Esophagus squamous epithelium (tissue), 5 donors: ENCODE measurements at regions of chr2 and their contacts with region 1.

Region 1: GRCh38 chr2:69306822-69307578 is 80.0 kb downstream of the GFPT1 start:
- DNase-seq: peak; percentile 33
- H3K4me3 ChIP-seq: peak overlapping the region; percentile 34 to 84 (median 60)
- H3K27ac ChIP-seq: peak overlapping the region; percentile 67 to 88 (median 83)
- H3K4me1 ChIP-seq: peaks cover 34 to 56% (median 36%) of the 10 kb centered on the region in 3 donors
- H3K27me3 ChIP-seq: peaks cover 0 to 24% (median 0%) of the 10 kb centered on the region in 4 donors
- CTCF ChIP-seq: peak; percentile 33 to 87 (median 80)
- POLR2A ChIP-seq: no peak

Region 2: GRCh38 chr2:69012310-69013141 is 294.5 kb before region 1 on chr2:
- intact Hi-C with region 1: loop called (anchors 5 kb)
- DNase-seq: no peak
- H3K4me3 ChIP-seq: peak overlapping the region; percentile 47 to 87 (median 76)
- H3K27ac ChIP-seq: peak overlapping the region; percentile 63 to 91 (median 88)
- H3K4me1 ChIP-seq: peaks cover 0 to 49% (median 23%) of the 10 kb centered on the region in 3 donors
- H3K27me3 ChIP-seq: peaks cover 0 to 22% (median 0%) of the 10 kb centered on the region in 4 donors
- CTCF ChIP-seq: peak in 5 of 6 experiments; percentile 76 to 79 (median 77)
- POLR2A ChIP-seq: no peak

Region 3: DNA sequence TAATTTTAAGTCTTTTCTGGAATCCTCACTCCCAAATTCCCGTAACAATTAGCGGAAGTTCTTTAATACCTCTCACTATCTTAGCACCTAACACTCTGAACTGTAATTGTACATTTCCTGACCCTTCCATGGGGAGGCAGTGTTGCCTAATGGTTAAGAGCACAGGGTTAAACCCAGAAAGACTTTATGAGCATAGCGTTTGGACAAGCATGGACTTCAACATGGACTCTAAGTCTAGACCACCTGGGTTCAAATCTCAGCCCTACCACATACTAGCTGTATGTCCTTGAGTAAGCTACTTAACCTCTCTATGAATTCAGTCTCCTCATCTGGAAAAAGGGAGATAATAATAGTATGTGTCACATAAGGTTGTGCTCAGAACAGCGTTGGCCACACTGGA is 281.0 kb before region 1 on chr2:
- intact Hi-C with region 1: loop called (anchors 5 kb)
- DNase-seq: no peak
- H3K4me3 ChIP-seq: no peak overlapping the region
- H3K27ac ChIP-seq: peak overlapping the region in 1 of 4 donors; percentile 19
- H3K4me1 ChIP-seq: peaks cover 0 to 36% (median 19%) of the 10 kb centered on the region in 3 donors
- H3K27me3 ChIP-seq: no peaks in the 10 kb centered on the region
- CTCF ChIP-seq: peak in 5 of 6 experiments; percentile 47 to 78 (median 65)
- POLR2A ChIP-seq: no peak

Region 4: DNA sequence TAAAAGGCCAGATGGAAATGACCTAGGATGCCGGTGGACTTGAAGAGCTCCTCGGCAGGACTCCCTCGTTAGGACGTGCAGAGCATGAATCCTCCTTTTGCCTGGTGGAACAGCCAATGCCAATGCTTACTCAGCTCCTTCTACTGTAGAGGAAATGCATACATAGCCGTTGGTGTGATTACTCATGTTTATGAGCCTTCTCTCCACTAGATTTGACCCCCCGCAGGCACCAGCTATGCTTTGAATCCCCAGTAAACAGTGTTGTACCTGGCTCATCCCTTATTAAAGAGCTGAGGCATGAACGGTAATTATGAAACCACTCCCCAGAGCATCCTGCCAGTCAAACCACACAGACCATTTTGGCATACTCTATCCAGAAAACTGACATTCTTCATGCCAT is 121.2 kb before region 1 on chr2:
- intact Hi-C with region 1: loop called (anchors 10 kb)
- DNase-seq: no peak
- H3K4me3 ChIP-seq: no peak overlapping the region
- H3K27ac ChIP-seq: peak overlapping the region; percentile 15 to 82 (median 58)
- H3K4me1 ChIP-seq: peaks cover 15 to 76% (median 28%) of the 10 kb centered on the region in 3 donors
- H3K27me3 ChIP-seq: no peaks in the 10 kb centered on the region
- CTCF ChIP-seq: no peak
- POLR2A ChIP-seq: no peak

Region 5: DNA sequence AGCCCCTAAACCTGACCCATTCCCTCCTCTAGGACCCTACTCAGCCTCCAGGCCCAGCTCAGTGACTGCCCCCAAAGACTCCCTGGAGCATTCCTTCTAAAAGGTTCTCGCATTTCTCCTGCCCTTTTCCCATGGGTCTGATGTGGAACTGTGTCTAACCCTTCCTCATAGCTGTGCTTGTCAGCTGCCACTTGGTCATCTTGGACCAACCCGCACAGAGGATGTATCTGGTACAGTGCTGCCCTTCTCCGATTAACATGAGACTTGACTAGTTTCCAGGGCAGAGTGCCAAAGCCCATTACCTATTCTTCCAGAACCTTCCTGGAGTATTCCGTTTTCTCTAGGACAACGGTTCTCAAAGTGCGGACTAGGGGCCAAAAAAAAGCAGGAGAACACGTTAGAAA is 130.8 kb after region 1 on chr2:
- intact Hi-C with region 1: no loop called
- DNase-seq: no peak
- H3K4me3 ChIP-seq: peak overlapping the region; percentile 80 to 94 (median 92)
- H3K27ac ChIP-seq: peak overlapping the region; percentile 98 to 99 (median 98)
- H3K4me1 ChIP-seq: peaks cover 13 to 41% (median 16%) of the 10 kb centered on the region in 3 donors
- H3K27me3 ChIP-seq: no peaks in the 10 kb centered on the region
- CTCF ChIP-seq: no peak
- POLR2A ChIP-seq: no peak

Region 6: GRCh38 chr2:69985688-69986087 is 678.7 kb after region 1 on chr2:
- intact Hi-C with region 1: no loop called
- DNase-seq: no peak
- H3K4me3 ChIP-seq: no peak overlapping the region
- H3K27ac ChIP-seq: no peak overlapping the region
- H3K4me1 ChIP-seq: peaks cover 0 to 14% (median 0%) of the 10 kb centered on the region in 3 donors
- H3K27me3 ChIP-seq: no peaks in the 10 kb centered on the region
- CTCF ChIP-seq: no peak
- POLR2A ChIP-seq: no peak